ENCODE measurements at regions of chrX and their contacts with region 1.

Region 1: GRCh38 chrX:140057001-140057411 is 91.7 kb upstream of the CXorf66 start:
- DNase-seq: peak; percentile 31 to 76
- ATAC-seq: peak; percentile 99 to 100
- H3K4me3 ChIP-seq: no peak overlapping the region
- H3K27ac ChIP-seq: no peak overlapping the region
- H3K4me1 ChIP-seq: no peaks in the 10 kb centered on the region
- CTCF ChIP-seq: peak; percentile 68
- EP300 ChIP-seq: no peak
- POLR2A ChIP-seq: no peak
- RAD21 ChIP-seq: peak; percentile 61 to 73

Region 2: DNA sequence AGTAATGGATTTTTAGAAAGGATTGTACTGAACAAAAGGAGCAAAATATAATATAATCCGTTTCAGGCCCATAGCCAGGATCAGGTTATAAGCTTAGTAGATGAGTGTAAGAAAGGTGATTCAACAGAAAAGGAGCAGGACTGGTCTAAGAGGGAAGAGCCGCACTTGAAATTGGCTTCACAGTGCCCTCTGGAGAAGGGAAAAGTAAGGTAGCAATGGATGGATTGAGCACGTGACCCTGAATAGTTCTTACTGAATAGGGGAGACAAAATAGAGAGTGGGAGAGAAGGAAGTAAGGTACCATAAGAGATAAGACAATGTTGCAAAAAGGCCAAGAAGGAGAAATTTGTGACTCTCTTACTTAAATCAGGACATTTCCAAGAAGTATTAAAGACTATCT is 107.3 kb before region 1 on chrX:
- CTCF ChIA-PET with region 1: no interaction called
- POLR2A ChIA-PET with region 1: no interaction called
- DNase-seq: peak in 1 of 2 experiments; percentile 9
- ATAC-seq: peak in 1 of 2 experiments; percentile 52; a peak in 2 of 6 replicates
- H3K4me3 ChIP-seq: no peak overlapping the region
- H3K27ac ChIP-seq: no peak overlapping the region
- H3K4me1 ChIP-seq: no peaks in the 10 kb centered on the region
- CTCF ChIP-seq: no peak
- EP300 ChIP-seq: no peak
- POLR2A ChIP-seq: no peak
- RAD21 ChIP-seq: no peak

Region 3: GRCh38 chrX:140141444-140142029 is 84.5 kb after region 1 on chrX:
- CTCF ChIA-PET with region 1: interaction called, 15 read pairs
- POLR2A ChIA-PET with region 1: no interaction called
- DNase-seq: peak; percentile 7 to 35
- ATAC-seq: peak in 1 of 2 experiments; percentile 63; a peak in 2 of 6 replicates
- H3K4me3 ChIP-seq: no peak overlapping the region
- H3K27ac ChIP-seq: no peak overlapping the region
- H3K4me1 ChIP-seq: no peaks in the 10 kb centered on the region
- CTCF ChIP-seq: peak; percentile 50
- EP300 ChIP-seq: no peak
- POLR2A ChIP-seq: no peak
- RAD21 ChIP-seq: peak; percentile 38 to 45